Right cardiac atrium (tissue), 5 donors: ENCODE measurements at regions of chr14 and their contacts with region 1.

Region 1: DNA sequence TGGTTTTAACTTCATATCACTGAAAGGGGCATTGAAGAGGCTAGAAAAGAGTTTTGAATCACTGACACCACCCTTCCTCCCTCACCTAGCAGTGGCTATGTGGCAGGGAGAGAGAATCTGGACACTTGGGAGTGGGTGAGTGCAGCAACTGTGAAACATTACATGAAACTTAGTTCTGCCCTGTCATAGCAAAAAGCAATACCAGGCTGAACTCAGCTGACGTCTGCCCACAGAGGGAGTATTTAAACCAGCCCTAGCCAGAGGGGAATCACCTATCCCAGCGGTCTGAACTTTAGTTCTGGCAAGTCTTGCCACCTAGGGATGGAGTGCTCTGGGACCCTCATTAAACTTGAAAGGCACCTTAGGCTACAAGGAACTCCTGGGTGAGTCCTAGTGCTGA is 20.7 kb upstream of the UNC79 start:
- DNase-seq: no peak
- ATAC-seq: no peak
- H3K4me3 ChIP-seq: no peak overlapping the region
- H3K27ac ChIP-seq: no peak overlapping the region
- H3K4me1 ChIP-seq: no peaks in the 10 kb centered on the region
- H3K27me3 ChIP-seq: no peaks in the 10 kb centered on the region

Region 2: DNA sequence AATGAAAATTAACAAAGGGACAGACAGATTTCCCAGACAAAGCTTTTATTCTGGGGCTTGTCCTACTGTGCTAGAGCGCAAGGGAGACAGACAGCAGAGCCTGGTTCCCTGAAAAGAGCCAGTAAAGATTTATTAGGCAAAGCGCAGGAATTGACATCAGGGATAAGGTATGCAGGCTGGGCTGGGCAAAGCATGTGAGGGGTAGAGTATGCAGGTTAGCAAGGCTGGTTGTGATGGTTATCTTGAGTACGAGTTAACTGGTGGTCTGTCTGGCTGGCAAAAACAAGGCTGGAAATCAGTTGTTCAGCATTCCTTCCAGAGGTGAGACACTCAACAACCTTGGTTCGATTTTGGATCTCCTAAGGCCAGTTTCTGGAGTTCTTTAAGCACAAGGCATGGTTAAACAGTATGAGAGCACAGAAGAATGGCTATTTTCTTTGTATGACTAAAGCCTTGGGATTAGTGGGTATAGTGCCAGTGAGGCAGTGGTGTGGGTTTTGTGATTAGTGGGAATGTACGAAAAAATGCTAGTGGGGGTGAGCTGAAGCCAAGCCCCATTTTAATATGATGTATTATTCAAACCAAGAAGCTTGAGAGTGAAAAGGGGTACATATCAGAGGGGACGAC is 108.1 kb before region 1 on chr14:
- intact Hi-C with region 1: no loop called
- DNase-seq: no peak
- ATAC-seq: no peak
- H3K4me3 ChIP-seq: no peak overlapping the region
- H3K27ac ChIP-seq: no peak overlapping the region
- H3K4me1 ChIP-seq: peaks cover 12% of the 10 kb centered on the region
- H3K27me3 ChIP-seq: no peaks in the 10 kb centered on the region

Region 3: GRCh38 chr14:93331002-93331727 is 78.9 kb before region 1 on chr14:
- intact Hi-C with region 1: no loop called
- DNase-seq: peak; percentile 65 to 75 (median 69)
- ATAC-seq: peak in 1 of 2 donors; percentile 44
- H3K4me3 ChIP-seq: peak overlapping the region; percentile 86
- H3K27ac ChIP-seq: peak overlapping the region; percentile 97
- H3K4me1 ChIP-seq: peaks cover under 1% of the 10 kb centered on the region
- H3K27me3 ChIP-seq: no peaks in the 10 kb centered on the region

Region 4: GRCh38 chr14:93343266-93343665 is 66.8 kb before region 1 on chr14:
- intact Hi-C with region 1: no loop called
- DNase-seq: no peak
- ATAC-seq: no peak
- H3K4me3 ChIP-seq: no peak overlapping the region
- H3K27ac ChIP-seq: no peak overlapping the region
- H3K4me1 ChIP-seq: no peaks in the 10 kb centered on the region
- H3K27me3 ChIP-seq: no peaks in the 10 kb centered on the region

Region 5: DNA sequence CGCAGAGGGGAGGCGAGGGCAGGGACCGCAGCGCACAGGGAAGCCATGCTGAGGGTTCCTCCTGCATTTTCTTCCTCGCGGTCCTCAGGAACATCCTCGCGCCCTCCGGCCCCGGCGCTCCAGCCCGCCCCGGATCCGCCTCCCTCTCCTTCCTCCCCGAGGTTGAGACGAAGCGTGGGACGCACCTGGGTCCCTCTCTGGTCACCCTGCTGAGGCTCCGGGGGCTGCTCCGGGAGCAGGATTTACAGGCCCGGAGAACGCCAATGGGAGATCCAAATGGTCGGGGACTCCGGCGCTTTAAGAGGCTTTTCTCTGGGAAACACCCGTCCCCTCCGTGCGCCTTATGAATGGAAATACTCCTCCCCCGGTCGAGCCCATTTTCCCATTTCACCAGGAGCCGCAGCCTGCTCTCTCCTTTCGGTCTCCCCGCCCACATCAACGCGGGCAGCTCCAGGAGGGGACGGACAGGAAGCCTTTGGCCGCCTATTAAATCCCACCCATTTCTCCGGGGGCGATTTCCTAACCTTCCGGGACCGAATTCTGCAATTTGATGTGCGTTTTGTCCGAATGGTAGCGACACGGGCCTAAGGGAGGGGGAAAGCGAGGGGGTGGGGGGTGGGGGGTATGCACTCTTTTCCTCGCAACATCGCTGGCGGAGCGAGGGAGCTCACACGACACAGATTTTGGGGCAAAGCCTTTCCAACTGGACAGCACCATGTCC is 20.5 kb after region 1 on chr14 and contains the start of gene UNC79:
- intact Hi-C with region 1: loop called in 1 of 4 experiments (anchors 2 kb)
- DNase-seq: peak in 2 of 3 donors; percentile 8 to 38
- ATAC-seq: no peak
- H3K4me3 ChIP-seq: peak within 1 kb of the TSS; percentile 53
- H3K27ac ChIP-seq: no peak within 1 kb of the TSS
- H3K4me1 ChIP-seq: peaks cover 4% of the 10 kb centered on the region
- H3K27me3 ChIP-seq: peaks cover 3% of the 10 kb centered on the region
- total RNA-seq, gene UNC79: 0.21 to 0.40 (median 0.30) TPM